ENCODE measurements at regions of chr3 and their contacts with region 1.

Region 1: GRCh38 chr3:160707187-160707794 is 30.3 kb downstream of the ARL14 start:
- H3K4me3 Mint-ChIP-seq: no peak overlapping the region
- H3K27ac Mint-ChIP-seq: no peak overlapping the region
- H3K4me1 Mint-ChIP-seq: no peaks in the 10 kb centered on the region
- H3K27me3 Mint-ChIP-seq: peaks cover 14% of the 10 kb centered on the region

Region 2: DNA sequence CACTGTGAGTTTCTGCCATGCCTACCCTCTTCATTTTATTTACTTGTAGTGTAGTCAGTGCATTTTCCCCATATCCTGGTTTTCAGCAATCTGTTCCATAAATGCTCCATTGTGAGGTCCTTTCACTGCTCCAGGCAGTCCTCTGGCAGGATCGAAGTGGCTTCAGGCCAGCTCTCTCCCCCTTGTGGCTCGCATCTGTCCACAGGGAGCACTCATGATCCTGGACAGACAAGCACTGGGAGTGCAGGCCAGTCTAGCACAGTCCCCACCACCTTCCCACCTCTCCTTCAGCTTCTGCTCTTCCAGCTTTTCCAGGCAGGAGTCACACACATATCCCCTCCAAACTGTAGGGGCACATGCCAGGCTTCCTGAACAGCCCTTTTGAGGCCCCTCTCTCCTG is 222.3 kb after region 1 on chr3:
- intact Hi-C with region 1: loop called (anchors 5 kb)
- H3K4me3 Mint-ChIP-seq: no peak overlapping the region
- H3K27ac Mint-ChIP-seq: no peak overlapping the region
- H3K4me1 Mint-ChIP-seq: peaks cover 8% of the 10 kb centered on the region
- H3K27me3 Mint-ChIP-seq: peaks cover 2% of the 10 kb centered on the region

Region 3: DNA sequence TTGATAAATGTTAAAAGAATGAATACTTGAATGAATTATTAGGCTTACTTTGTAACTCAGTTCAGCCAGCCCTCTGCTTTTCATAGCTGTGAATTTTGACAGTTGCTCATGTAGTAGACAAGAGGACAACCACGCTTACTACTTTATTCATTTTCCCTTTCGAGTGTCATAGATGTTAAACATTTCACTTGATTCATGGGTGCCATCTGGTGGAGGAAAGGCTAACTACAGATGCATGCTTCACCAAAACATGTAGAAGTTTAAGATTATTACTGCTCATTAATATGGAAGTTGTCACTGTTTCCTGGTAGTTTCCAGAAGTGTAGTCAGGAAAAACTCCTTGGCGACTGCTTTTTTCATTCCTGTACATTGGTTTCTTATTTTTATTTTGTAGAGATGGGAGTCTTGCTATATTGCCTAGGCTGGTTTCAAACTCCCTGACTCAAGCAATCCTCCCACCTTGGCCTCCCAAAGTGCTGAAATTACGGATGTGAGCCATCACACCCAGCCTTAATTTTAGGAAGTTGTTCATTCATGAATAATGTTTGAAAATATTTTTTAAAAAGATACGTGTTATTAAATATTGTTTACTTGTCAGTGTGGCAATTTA is 234.7 kb after region 1 on chr3:
- intact Hi-C with region 1: loop called (anchors 1 kb)
- H3K4me3 Mint-ChIP-seq: no peak overlapping the region
- H3K27ac Mint-ChIP-seq: no peak overlapping the region
- H3K4me1 Mint-ChIP-seq: no peaks in the 10 kb centered on the region
- H3K27me3 Mint-ChIP-seq: no peaks in the 10 kb centered on the region

Measured in dendritic cell treated with granulocyte-macrophage colony-stimulating factor and Interleukin-4, amounts not matched to agents 40 ng/mL and 50 ng/mL, for 4 days (primary cell).